Psoas muscle (tissue), 8 donors: ENCODE measurements at regions of chr9 and their contacts with region 1.

Region 1: GRCh38 chr9:127519301-127520166 is 68.2 kb downstream of the LRSAM1 start:
- DNase-seq: peak in 1 of 2 donors; percentile 50
- ATAC-seq: peak; percentile 48 to 64 (median 55)
- H3K4me3 ChIP-seq: no peak overlapping the region
- H3K27ac ChIP-seq: peak overlapping the region; percentile 58
- H3K4me1 ChIP-seq: peaks cover 10% of the 10 kb centered on the region
- H3K27me3 ChIP-seq: no peaks in the 10 kb centered on the region
- CTCF ChIP-seq: no peak

Region 2: GRCh38 chr9:127545196-127546124 is 25.9 kb after region 1 on chr9:
- intact Hi-C with region 1: no loop called
- DNase-seq: peak in 1 of 2 donors; percentile 63
- ATAC-seq: peak in 2 of 4 donors; percentile 4 to 10
- H3K4me3 ChIP-seq: no peak overlapping the region
- H3K27ac ChIP-seq: no peak overlapping the region
- H3K4me1 ChIP-seq: peaks cover 7% of the 10 kb centered on the region
- H3K27me3 ChIP-seq: peaks cover 0 to 3% (median 0%) of the 10 kb centered on the region in 3 donors
- CTCF ChIP-seq: no peak

Region 3: DNA sequence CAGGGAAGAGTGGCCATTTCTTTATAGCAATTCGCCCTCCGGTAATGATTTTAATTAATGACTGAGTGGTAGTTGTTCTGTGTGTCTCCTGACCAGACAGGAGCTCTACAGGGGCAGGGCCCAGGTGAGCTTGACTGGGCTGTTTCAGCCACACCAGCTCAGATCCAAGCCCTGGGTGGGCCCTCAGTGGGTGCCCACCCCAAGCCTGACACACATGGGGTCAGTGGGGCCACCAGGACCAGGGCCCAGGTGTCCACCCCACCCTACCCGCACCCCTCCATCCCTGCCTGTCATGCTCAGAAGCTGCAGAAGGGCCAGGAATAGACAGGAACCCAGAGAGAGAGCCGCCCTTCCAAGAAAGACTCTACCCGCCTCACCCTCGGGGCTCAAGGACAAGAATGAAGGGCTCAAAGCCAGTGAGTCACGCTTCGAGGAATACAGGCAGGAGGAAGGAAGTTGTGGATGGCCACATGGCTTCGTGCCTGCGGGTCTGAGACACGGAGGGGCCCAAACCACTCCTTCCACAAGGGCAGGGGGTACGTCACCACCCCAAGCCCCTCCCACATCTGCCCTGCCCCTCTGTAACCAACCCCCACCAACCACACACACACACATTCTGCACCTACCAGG is 36.3 kb after region 1 on chr9:
- intact Hi-C with region 1: loop called in 1 of 2 experiments (anchors 5 kb)
- DNase-seq: peak; percentile 73 to 82
- ATAC-seq: peak in 3 of 4 donors; percentile 46 to 62 (median 54)
- H3K4me3 ChIP-seq: no peak overlapping the region
- H3K27ac ChIP-seq: peak overlapping the region; percentile 1
- H3K4me1 ChIP-seq: peaks cover 29% of the 10 kb centered on the region
- H3K27me3 ChIP-seq: no peaks in the 10 kb centered on the region
- CTCF ChIP-seq: no peak

Region 4: DNA sequence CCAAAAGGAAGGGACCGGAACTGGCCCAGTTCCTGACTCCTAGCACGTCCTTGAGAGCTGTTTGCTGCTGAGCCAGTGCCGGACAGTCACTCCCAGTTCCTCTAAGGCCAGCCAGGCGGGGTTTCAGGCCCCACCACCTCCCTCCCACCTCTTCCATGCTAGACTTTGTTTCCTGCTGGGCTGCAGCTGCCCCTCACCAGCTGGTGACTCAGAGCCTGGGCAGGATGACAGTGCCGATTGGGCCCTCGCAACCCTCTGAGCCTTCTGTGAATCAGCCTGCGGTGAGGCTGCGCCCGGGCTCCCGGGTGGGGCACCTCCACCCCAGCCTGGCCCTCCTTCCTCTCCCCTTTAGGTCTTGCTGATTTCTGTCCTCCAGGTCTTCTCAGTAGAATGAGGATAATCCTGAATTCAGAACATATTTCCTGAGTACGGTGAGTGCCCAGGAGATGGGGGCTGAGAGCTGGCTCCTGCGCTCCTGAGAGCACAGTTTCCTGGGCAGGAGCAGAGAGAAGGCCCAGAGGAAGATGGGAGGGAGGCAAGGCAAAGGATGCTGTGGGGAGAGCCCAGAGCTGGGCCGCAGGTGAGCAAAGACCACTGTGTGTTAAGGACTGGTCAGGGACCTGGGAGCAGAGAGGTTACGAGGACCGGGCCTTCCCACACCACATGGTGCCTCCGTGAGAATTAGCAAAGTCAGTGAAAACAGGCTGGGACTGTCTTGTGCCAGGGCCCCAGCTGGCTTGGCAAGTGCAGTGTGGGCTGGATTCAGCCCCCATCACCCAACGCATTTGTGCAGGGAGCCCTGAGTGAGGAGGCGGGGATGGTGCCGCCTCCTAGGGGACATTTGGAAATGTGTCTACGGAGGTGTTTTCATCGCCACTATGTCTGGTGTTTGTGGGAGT is 59.7 kb after region 1 on chr9:
- intact Hi-C with region 1: loop called in 1 of 2 experiments (anchors 5 kb)
- DNase-seq: peak; percentile 90 to 91
- ATAC-seq: peak; percentile 88 to 92 (median 92)
- H3K4me3 ChIP-seq: peak overlapping the region; percentile 49
- H3K27ac ChIP-seq: peak overlapping the region; percentile 80
- H3K4me1 ChIP-seq: peaks cover 4% of the 10 kb centered on the region
- H3K27me3 ChIP-seq: peaks cover 0 to 2% (median 0%) of the 10 kb centered on the region in 3 donors
- CTCF ChIP-seq: peak; percentile 5